A673 (cell line): ENCODE measurements at regions of chr15 and their contacts with region 1.

Region 1: DNA sequence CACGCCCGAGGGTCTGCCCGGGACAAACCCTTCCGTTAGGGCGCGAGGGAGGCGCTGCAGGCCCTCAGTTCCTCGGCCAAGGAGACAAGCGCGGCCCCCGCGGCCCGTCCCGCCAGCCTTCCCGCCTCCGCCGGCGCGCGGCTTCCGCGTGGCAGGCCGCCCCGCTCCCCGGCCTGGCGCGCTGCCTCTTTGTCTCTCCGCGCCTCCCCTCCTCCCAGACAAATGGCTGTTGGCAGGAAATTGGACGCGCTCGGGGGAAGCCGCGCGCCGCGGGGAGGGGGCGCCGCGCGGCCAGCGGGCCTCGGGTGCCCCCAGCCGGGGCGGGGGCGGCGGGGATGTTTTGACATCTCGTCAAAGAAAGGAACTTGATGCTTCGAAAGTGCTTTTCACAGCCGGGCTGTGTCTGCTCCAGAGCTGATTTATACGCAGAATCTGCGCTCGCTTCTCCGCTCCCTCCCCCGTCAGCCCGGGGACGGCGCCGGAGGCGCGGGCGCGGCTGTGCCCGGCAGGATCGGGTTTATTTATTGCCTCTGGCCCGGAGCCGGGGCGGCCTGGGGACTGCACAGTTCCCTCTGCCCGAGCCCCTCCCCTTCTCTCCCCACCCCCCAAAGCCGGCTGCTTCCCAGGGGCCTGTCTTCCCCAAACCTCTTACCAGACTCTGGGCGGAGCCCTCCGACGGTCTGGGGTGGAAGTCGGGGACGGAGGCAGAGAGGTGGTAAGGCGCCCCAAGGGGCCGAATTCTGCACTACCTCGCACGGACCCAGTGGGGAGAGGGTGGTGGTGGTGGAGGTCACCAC is 20.7 kb downstream of the SHF start:
- DNase-seq: peak; percentile 93
- H3K4me3 ChIP-seq: peak overlapping the region; percentile 45
- H3K27ac ChIP-seq: peak overlapping the region; percentile 96
- H3K4me1 ChIP-seq: peaks cover 21% of the 10 kb centered on the region
- H3K27me3 ChIP-seq: no peaks in the 10 kb centered on the region
- CTCF ChIP-seq: peak; percentile 56

Region 2: DNA sequence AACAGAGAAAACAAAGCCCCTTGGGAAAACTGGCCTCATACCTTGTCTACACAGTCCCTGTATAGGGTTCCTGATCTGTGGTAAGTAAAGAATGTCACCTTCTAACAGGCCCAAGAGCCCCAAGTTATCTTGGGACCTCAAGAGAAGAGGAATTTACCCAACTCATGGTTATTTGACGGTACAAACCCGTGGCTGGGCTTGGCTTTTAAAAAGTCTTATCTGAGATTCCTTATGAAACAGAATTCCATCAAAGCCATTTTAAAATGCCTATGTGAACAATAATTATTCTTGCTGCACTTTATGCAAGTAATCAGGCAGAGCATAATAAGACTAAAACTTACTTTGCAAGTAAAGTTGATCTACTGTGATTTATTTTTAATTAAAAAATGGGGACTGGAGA is 158.0 kb before region 1 on chr15:
- CTCF ChIA-PET with region 1: no interaction called
- POLR2A ChIA-PET with region 1: no interaction called
- intact Hi-C with region 1: no loop called
- DNase-seq: no peak
- H3K4me3 ChIP-seq: no peak overlapping the region
- H3K27ac ChIP-seq: no peak overlapping the region
- H3K4me1 ChIP-seq: no peaks in the 10 kb centered on the region
- H3K27me3 ChIP-seq: no peaks in the 10 kb centered on the region
- CTCF ChIP-seq: no peak

Region 3: GRCh38 chr15:45198337-45199135 is 31.5 kb after region 1 on chr15:
- CTCF ChIA-PET with region 1: interaction called, 9 read pairs
- POLR2A ChIA-PET with region 1: interaction called, 9 read pairs
- intact Hi-C with region 1: loop called (anchors 1 kb)
- DNase-seq: peak; percentile 96
- H3K4me3 ChIP-seq: peak overlapping the region; percentile 72
- H3K27ac ChIP-seq: peak overlapping the region; percentile 92
- H3K4me1 ChIP-seq: peaks cover 5% of the 10 kb centered on the region
- H3K27me3 ChIP-seq: no peaks in the 10 kb centered on the region
- CTCF ChIP-seq: peak; percentile 89

Region 4: GRCh38 chr15:45307230-45307924 is 140.3 kb after region 1 on chr15:
- CTCF ChIA-PET with region 1: no interaction called
- POLR2A ChIA-PET with region 1: no interaction called
- intact Hi-C with region 1: no loop called
- DNase-seq: peak; percentile 56
- H3K4me3 ChIP-seq: peak overlapping the region; percentile 15
- H3K27ac ChIP-seq: no peak overlapping the region
- H3K4me1 ChIP-seq: no peaks in the 10 kb centered on the region
- H3K27me3 ChIP-seq: peaks cover 4% of the 10 kb centered on the region
- CTCF ChIP-seq: peak; percentile 66

Region 5: GRCh38 chr15:45402162-45402954 is 235.3 kb after region 1 on chr15:
- CTCF ChIA-PET with region 1: interaction called, 6 read pairs
- POLR2A ChIA-PET with region 1: no interaction called
- intact Hi-C with region 1: loop called (anchors 5 kb)
- DNase-seq: peak; percentile 99
- H3K4me3 ChIP-seq: peak overlapping the region; percentile 95
- H3K27ac ChIP-seq: peak overlapping the region; percentile 89
- H3K4me1 ChIP-seq: peaks cover 17% of the 10 kb centered on the region
- H3K27me3 ChIP-seq: peaks cover 6% of the 10 kb centered on the region
- CTCF ChIP-seq: no peak

Region 6: DNA sequence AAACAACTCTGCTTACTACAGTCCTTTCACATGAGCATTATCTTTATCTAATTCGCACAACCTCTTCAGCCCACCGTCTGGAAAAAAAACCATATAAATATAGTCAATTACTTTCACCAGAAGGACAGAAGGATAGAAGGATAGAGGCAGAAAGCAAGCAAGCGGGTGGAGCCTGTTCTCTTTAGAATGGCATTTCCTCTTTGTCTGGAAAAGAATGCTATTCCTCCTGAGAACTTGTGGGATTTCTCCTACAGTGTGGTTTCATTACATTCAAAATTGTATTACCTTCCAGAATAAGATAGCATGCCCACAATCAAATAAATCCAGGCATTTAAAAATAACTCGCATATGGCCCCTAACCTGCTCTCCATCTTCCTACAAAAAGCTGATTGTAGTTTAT is 332.4 kb after region 1 on chr15:
- CTCF ChIA-PET with region 1: no interaction called
- POLR2A ChIA-PET with region 1: no interaction called
- intact Hi-C with region 1: no loop called
- DNase-seq: no peak
- H3K4me3 ChIP-seq: no peak overlapping the region
- H3K27ac ChIP-seq: no peak overlapping the region
- H3K4me1 ChIP-seq: no peaks in the 10 kb centered on the region
- H3K27me3 ChIP-seq: no peaks in the 10 kb centered on the region
- CTCF ChIP-seq: no peak

Region 7: DNA sequence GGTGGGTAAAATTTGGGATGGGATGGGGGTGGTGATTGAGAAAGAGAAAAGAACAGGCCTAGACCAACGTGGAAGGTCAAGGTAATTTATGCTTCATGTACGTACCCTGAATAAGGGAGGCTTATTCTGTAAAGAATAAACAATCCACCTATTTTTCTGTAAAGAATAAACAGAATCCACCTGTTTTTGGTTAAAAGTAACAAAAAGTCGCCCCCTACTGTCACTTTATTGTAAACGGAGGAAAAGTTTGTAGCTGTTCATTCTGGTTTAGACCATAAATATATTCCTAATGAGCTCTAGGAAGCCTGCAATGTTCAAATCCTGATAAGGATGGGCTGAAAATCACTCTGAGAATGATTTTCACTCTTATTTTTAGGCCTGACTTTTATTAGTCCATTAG is 444.3 kb after region 1 on chr15:
- CTCF ChIA-PET with region 1: interaction called, 5 read pairs
- POLR2A ChIA-PET with region 1: no interaction called
- intact Hi-C with region 1: loop called (anchors 5 kb)
- DNase-seq: peak; percentile 40
- H3K4me3 ChIP-seq: no peak overlapping the region
- H3K27ac ChIP-seq: no peak overlapping the region
- H3K4me1 ChIP-seq: no peaks in the 10 kb centered on the region
- H3K27me3 ChIP-seq: no peaks in the 10 kb centered on the region
- CTCF ChIP-seq: peak; percentile 62